GM10248 (cell line): ENCODE measurements at regions of chr14 and their contacts with region 1.

Region 1: DNA sequence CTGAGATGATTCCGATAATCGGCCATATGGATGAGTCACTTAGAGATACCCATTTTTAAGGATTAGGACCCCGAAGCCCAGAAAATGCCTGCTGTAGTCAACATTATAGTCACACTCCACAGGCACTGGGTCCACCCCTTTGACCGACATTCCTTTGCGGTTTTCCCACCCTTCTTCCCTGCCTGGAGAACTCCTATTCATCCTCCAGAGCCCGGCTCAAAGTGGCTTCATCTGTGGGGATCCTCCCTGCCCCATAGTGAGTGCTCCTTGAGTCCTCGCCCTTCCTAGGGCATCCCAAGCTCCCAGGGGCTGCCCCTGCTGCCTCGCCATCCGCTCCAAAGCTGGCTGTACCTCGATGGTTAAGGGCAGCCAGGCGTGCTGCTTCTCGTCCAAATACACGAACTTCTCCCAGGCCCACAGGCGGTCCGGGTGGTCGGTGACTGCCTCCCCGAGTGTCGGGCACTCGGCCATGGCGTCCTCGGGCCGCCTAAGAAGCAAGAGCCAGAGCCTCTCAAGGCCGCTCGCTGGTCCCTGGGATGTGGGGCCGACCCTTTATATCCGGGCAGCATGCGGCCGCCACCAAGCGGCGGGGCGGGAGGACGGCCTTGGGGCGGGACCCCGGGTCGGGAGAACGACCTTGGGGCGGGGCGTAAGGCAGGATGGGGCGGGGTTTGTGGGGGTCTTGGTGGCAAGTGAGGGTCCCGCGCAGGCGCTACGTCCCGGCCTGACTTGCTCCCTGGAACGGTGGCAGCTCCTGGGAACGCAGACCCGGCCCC is at the start of gene TCL1A:
- DNase-seq: peak; percentile 91
- CTCF ChIP-seq: peak; percentile 66

Region 2: GRCh38 chr14:95697764-95698163 is 16.0 kb before region 1 on chr14:
- CTCF ChIA-PET with region 1: interaction called, 25 read pairs
- POLR2A ChIA-PET with region 1: interaction called, 3 read pairs
- DNase-seq: peak; percentile 49
- CTCF ChIP-seq: no peak

Region 3: DNA sequence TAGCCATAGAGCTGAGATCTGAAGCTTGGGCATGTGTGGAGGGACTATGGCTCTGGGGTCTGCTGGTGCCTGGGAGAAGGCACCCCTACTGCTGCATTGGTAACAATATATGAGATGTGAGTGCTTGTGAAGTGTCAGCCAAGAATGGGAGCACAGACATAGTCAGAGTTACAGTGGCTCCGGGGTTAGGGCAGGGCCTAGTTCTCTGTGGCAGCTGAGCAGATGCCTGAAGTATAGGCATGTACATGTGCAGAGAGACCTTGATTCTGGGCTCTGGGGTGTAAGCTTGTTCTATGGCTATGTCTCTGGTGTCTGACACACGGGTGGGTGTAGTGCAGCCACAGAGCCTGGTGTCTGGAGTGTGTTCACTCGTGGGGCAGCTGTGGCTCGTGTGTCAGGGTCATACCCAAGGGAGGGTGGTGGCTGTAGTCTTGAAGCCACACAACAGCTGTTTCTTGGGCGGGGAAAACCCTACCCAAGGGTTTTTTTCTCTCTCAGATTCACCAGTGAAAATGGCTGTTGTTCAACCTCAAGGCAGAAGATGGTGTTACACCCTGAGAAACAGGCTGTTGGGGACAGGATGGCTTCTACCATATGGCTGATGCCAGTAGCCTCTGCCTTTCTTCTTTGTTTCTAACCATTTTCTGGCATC is 12.0 kb after region 1 on chr14:
- CTCF ChIA-PET with region 1: interaction called, 49 read pairs
- POLR2A ChIA-PET with region 1: no interaction called
- DNase-seq: peak; percentile 73
- CTCF ChIP-seq: no peak

Region 4: GRCh38 chr14:95741038-95741490 is 27.3 kb after region 1 on chr14:
- CTCF ChIA-PET with region 1: no interaction called
- POLR2A ChIA-PET with region 1: no interaction called
- DNase-seq: no peak
- CTCF ChIP-seq: no peak